HAP-1 (cell line): ENCODE measurements at regions of chr11 and their contacts with region 1.

Region 1: GRCh38 chr11:16605894-16606783 is 132.3 kb upstream of the C11orf58 start:
- DNase-seq: peak; percentile 83 to 93
- H3K4me3 ChIP-seq: peak overlapping the region; percentile 79
- H3K4me1 ChIP-seq: peaks cover 10% of the 10 kb centered on the region
- H3K27me3 ChIP-seq: no peaks in the 10 kb centered on the region

Region 2: GRCh38 chr11:15327786-15328231 is 1278.3 kb before region 1 on chr11:
- in situ Hi-C with region 1: loop called (anchors 25 kb)
- DNase-seq: peak; percentile 29 to 76
- H3K4me3 ChIP-seq: no peak overlapping the region
- H3K4me1 ChIP-seq: no peaks in the 10 kb centered on the region
- H3K27me3 ChIP-seq: no peaks in the 10 kb centered on the region

Region 3: GRCh38 chr11:15629690-15630321 is 976.3 kb before region 1 on chr11:
- in situ Hi-C with region 1: loop called (anchors 25 kb)
- DNase-seq: peak; percentile 12 to 64
- H3K4me3 ChIP-seq: no peak overlapping the region
- H3K4me1 ChIP-seq: no peaks in the 10 kb centered on the region
- H3K27me3 ChIP-seq: peaks cover 6% of the 10 kb centered on the region; the same call in 1 of the 2 replicates

Region 4: DNA sequence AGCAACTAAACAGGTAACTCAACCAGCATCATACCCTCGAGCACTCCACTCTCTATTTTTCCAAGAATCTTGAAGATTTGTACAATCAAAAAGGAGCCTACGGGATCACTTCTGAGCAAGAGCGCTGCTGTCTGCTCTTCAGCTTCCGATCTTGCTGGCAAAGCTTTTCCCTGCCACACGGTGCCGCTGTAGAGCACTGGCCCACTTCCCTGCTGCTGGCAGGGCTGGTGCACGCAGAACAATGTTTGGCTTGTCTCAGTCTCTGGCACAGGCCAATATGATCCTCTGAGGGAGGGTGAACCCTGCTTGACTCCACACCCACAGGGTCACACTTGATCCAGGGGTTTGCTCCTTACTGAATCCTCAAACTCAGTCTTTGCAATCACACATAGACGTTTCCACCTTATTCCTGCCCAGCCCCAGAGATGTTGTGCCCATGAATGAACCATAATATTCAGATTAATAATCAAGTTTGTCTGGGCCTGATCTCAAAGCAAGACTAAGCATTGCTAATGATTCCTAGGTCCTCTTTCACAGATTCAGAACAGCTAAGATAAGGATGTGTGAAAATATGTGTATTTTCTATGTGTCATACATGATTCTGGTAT is 786.4 kb before region 1 on chr11:
- in situ Hi-C with region 1: loop called (anchors 10 kb)
- DNase-seq: peak; percentile 47 to 83
- H3K4me3 ChIP-seq: no peak overlapping the region
- H3K4me1 ChIP-seq: no peaks in the 10 kb centered on the region
- H3K27me3 ChIP-seq: no peaks in the 10 kb centered on the region; the same call in none of the 2 replicates

Region 5: GRCh38 chr11:16184588-16184987 is 421.6 kb before region 1 on chr11:
- in situ Hi-C with region 1: loop called (anchors 25 kb)
- DNase-seq: no peak
- H3K4me3 ChIP-seq: no peak overlapping the region
- H3K4me1 ChIP-seq: peaks cover 4% of the 10 kb centered on the region; the same call in 1 of the 2 replicates
- H3K27me3 ChIP-seq: no peaks in the 10 kb centered on the region

Region 6: DNA sequence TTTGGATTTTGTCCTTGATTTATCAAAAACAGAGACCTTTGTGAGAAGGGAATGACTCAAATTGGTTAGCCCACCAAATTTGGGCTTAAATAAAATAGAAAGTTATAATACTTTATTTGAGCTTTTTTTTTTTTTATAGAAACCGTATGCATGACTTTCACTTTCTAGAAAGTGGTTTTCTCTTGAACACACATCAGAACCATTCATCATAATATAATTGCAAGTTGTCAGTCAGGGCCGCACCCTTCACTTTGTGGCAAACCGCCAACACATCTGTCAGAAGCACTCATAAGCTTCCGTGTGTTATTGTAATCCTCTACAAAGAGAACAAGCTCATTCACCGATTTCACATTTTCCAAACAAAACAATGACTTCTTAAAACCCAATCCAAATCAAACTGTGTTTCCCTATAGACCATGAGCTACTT is 325.9 kb before region 1 on chr11:
- in situ Hi-C with region 1: loop called (anchors 25 kb)
- DNase-seq: peak; percentile 73 to 82
- H3K4me3 ChIP-seq: no peak overlapping the region
- H3K4me1 ChIP-seq: peaks cover 23% of the 10 kb centered on the region
- H3K27me3 ChIP-seq: no peaks in the 10 kb centered on the region

Region 7: GRCh38 chr11:16312233-16312765 is 293.8 kb before region 1 on chr11:
- in situ Hi-C with region 1: no loop called
- DNase-seq: no peak
- H3K4me3 ChIP-seq: no peak overlapping the region
- H3K4me1 ChIP-seq: peaks cover 4% of the 10 kb centered on the region; the same call in 1 of the 2 replicates
- H3K27me3 ChIP-seq: no peaks in the 10 kb centered on the region

Region 8: DNA sequence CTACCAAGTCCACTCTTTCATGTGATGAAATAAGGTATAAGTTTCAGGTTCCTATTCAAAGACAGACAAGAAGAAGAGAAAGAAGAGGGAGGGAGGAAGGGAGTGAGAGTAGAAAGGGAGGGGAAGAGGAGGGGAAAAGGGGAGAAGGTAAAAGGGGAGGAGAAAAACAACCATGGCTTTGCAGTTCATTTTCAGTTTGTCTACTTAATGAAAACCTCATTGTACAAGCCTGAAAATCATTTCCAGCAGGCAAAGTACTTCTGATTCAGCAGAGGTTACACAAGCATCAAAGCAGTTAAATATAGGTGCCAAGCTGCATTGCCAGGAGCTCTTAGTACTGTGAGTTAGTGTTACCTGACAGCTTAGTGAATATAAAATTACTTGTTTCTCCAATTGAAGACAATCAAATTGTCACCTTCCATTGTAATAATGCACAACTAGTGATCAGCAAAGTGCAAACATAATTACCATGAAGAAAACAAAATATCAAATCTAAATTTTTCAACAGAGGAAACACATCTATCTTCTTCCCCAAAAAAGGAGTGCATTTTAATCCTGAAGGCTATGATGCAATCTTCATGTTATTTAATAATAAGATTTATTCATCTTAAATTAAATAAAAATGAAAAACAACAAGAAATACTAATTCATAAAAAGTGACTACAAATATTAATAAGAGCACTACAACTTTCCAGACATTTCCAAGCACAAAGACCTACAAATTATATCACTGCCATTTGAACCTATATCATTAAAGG is 258.0 kb before region 1 on chr11:
- in situ Hi-C with region 1: no loop called
- DNase-seq: no peak
- H3K4me3 ChIP-seq: no peak overlapping the region
- H3K4me1 ChIP-seq: no peaks in the 10 kb centered on the region
- H3K27me3 ChIP-seq: no peaks in the 10 kb centered on the region

Region 9: DNA sequence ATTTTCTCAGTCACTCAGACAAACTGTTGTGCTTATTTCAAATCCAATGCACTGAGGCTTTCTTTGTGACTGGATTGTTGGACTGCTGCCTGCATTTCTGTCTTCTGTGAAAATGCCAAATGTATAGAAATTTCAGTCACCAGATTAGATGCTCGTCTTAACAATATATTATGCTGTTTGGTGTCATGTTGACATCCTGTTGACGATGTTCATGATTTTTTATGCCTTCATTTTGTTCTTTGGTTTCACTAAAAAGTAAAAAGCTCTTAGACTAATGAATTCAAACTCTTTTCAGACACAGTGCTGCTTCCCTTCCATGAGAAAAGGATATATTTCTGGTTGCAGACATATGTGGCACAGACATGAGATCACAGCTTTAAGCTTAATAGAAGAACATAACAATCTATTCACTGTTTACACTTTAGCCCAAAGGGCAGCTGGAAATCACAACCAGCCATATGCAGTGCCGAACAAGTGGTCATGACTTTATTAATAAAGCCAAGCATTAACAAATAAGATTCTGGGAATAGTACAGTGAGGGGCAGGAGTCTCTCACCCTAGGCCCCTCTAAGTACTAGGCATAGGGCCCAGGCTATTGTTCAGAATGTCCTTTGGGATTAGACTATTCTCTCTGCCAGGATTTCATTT is 240.4 kb before region 1 on chr11:
- in situ Hi-C with region 1: loop called (anchors 10 kb)
- DNase-seq: peak; percentile 17 to 19
- H3K4me3 ChIP-seq: no peak overlapping the region
- H3K4me1 ChIP-seq: peaks cover 15% of the 10 kb centered on the region
- H3K27me3 ChIP-seq: no peaks in the 10 kb centered on the region